Activated naive CD4-positive, alpha-beta T cell treated with anti-CD3 and anti-CD28 coated beads for 36 hours (primary cell): ENCODE measurements at regions of chr6 and their contacts with region 1.

Region 1: GRCh38 chr6:72084992-72085569 is 198.7 kb downstream of the RIMS1 start:
- DNase-seq: no peak
- H3K4me3 Mint-ChIP-seq: no peak overlapping the region
- H3K27ac Mint-ChIP-seq: no peak overlapping the region
- H3K4me1 Mint-ChIP-seq: no peaks in the 10 kb centered on the region
- H3K27me3 Mint-ChIP-seq: peaks cover 3% of the 10 kb centered on the region

Region 2: GRCh38 chr6:71190809-71191208 is 894.3 kb before region 1 on chr6:
- CTCF ChIA-PET with region 1: no interaction called
- intact Hi-C with region 1: loop called (anchors 10 kb)
- DNase-seq: no peak
- H3K4me3 Mint-ChIP-seq: no peak overlapping the region
- H3K27ac Mint-ChIP-seq: no peak overlapping the region
- H3K4me1 Mint-ChIP-seq: no peaks in the 10 kb centered on the region
- H3K27me3 Mint-ChIP-seq: peaks cover 4% of the 10 kb centered on the region

Region 3: GRCh38 chr6:71383901-71384489 is 701.1 kb before region 1 on chr6:
- CTCF ChIA-PET with region 1: interaction called, 3 read pairs
- intact Hi-C with region 1: loop called (anchors 1 kb)
- DNase-seq: peak; percentile 21
- H3K4me3 Mint-ChIP-seq: no peak overlapping the region
- H3K27ac Mint-ChIP-seq: no peak overlapping the region
- H3K4me1 Mint-ChIP-seq: no peaks in the 10 kb centered on the region
- H3K27me3 Mint-ChIP-seq: peaks cover 10% of the 10 kb centered on the region

Region 4: DNA sequence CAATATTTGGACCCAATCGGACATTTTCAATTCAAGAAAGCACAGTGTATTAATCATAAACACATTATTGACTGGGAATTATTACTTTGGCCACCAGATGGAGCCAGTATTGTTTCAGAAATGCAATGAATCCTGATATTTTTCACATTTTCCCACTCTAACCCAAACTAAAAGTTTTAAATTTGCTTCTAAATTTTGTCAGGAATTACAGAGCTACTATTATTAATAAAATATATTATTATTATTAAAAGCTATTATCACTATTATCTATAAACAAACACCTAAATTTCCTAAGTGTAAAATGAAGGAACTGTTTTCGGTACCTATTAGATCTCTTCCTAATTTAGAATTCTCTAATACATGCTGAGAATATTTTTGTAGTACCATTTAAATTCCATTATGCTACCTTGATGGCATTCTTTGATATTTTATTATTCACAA is 551.1 kb before region 1 on chr6:
- CTCF ChIA-PET with region 1: interaction called, 3 read pairs
- intact Hi-C with region 1: loop called (anchors 1 kb)
- DNase-seq: no peak
- H3K4me3 Mint-ChIP-seq: no peak overlapping the region
- H3K27ac Mint-ChIP-seq: no peak overlapping the region
- H3K4me1 Mint-ChIP-seq: no peaks in the 10 kb centered on the region
- H3K27me3 Mint-ChIP-seq: peaks cover 8% of the 10 kb centered on the region

Region 5: GRCh38 chr6:71621918-71622519 is 463.1 kb before region 1 on chr6:
- CTCF ChIA-PET with region 1: no interaction called
- intact Hi-C with region 1: loop called (anchors 10 kb)
- DNase-seq: no peak
- H3K4me3 Mint-ChIP-seq: no peak overlapping the region
- H3K27ac Mint-ChIP-seq: no peak overlapping the region
- H3K4me1 Mint-ChIP-seq: no peaks in the 10 kb centered on the region
- H3K27me3 Mint-ChIP-seq: no peaks in the 10 kb centered on the region

Region 6: GRCh38 chr6:72061286-72061685 is 23.8 kb before region 1 on chr6:
- CTCF ChIA-PET with region 1: no interaction called
- intact Hi-C with region 1: no loop called
- DNase-seq: no peak
- H3K4me3 Mint-ChIP-seq: no peak overlapping the region
- H3K27ac Mint-ChIP-seq: no peak overlapping the region
- H3K4me1 Mint-ChIP-seq: no peaks in the 10 kb centered on the region
- H3K27me3 Mint-ChIP-seq: peaks cover 3% of the 10 kb centered on the region

Region 7: GRCh38 chr6:72149715-72150114 is 64.6 kb after region 1 on chr6:
- CTCF ChIA-PET with region 1: no interaction called
- intact Hi-C with region 1: no loop called
- DNase-seq: no peak
- H3K4me3 Mint-ChIP-seq: no peak overlapping the region
- H3K27ac Mint-ChIP-seq: no peak overlapping the region
- H3K4me1 Mint-ChIP-seq: no peaks in the 10 kb centered on the region
- H3K27me3 Mint-ChIP-seq: no peaks in the 10 kb centered on the region